ENCODE measurements at regions of chr6 and their contacts with region 1.

Region 1: GRCh38 chr6:12289933-12290820 is at the start of gene EDN1:
- DNase-seq: peak; percentile 84
- ATAC-seq: peak; percentile 88
- H3K4me3 ChIP-seq: peak within 1 kb of the TSS; percentile 74
- H3K27ac ChIP-seq: peak within 1 kb of the TSS; percentile 83
- H3K4me1 ChIP-seq: peaks cover 12% of the 10 kb centered on the region
- H3K27me3 ChIP-seq: no peaks in the 10 kb centered on the region
- CTCF ChIP-seq: peak; percentile 45
- POLR2A ChIP-seq: peak; percentile 89
- RAD21 ChIP-seq: peak; percentile 52
- total RNA-seq, gene EDN1: 5.6 and 8.6 TPM in 2 replicates

Region 2: GRCh38 chr6:12081771-12082170 is 208.4 kb before region 1 on chr6:
- CTCF ChIA-PET with region 1: interaction called, 3 read pairs
- POLR2A ChIA-PET with region 1: no interaction called
- dilution Hi-C with region 1: no loop called
- in situ Hi-C with region 1: no loop called
- intact Hi-C with region 1: loop called (anchors 10 kb)
- DNase-seq: no peak
- ATAC-seq: no peak
- H3K4me3 ChIP-seq: no peak overlapping the region
- H3K27ac ChIP-seq: no peak overlapping the region
- H3K4me1 ChIP-seq: peaks cover 10% of the 10 kb centered on the region
- H3K27me3 ChIP-seq: no peaks in the 10 kb centered on the region
- CTCF ChIP-seq: no peak
- POLR2A ChIP-seq: no peak
- RAD21 ChIP-seq: no peak

Region 3: GRCh38 chr6:12222405-12223366 is 67.5 kb before region 1 on chr6:
- CTCF ChIA-PET with region 1: no interaction called
- POLR2A ChIA-PET with region 1: no interaction called
- dilution Hi-C with region 1: no loop called
- in situ Hi-C with region 1: no loop called
- intact Hi-C with region 1: no loop called
- DNase-seq: no peak
- ATAC-seq: no peak
- H3K4me3 ChIP-seq: no peak overlapping the region
- H3K27ac ChIP-seq: no peak overlapping the region
- H3K4me1 ChIP-seq: no peaks in the 10 kb centered on the region
- H3K27me3 ChIP-seq: no peaks in the 10 kb centered on the region
- CTCF ChIP-seq: no peak
- POLR2A ChIP-seq: no peak
- RAD21 ChIP-seq: no peak

Region 4: GRCh38 chr6:12233693-12234571 is 56.2 kb before region 1 on chr6:
- CTCF ChIA-PET with region 1: interaction called, 10 read pairs
- POLR2A ChIA-PET with region 1: no interaction called
- dilution Hi-C with region 1: no loop called
- in situ Hi-C with region 1: no loop called
- intact Hi-C with region 1: loop called (anchors 1 kb)
- DNase-seq: peak; percentile 84
- ATAC-seq: peak; percentile 90
- H3K4me3 ChIP-seq: no peak overlapping the region
- H3K27ac ChIP-seq: no peak overlapping the region
- H3K4me1 ChIP-seq: peaks cover 4% of the 10 kb centered on the region
- H3K27me3 ChIP-seq: no peaks in the 10 kb centered on the region
- CTCF ChIP-seq: peak; percentile 98
- POLR2A ChIP-seq: no peak
- RAD21 ChIP-seq: peak; percentile 88

Region 5: GRCh38 chr6:12335131-12335527 is 45.0 kb after region 1 on chr6:
- CTCF ChIA-PET with region 1: no interaction called
- POLR2A ChIA-PET with region 1: no interaction called
- dilution Hi-C with region 1: no loop called
- in situ Hi-C with region 1: no loop called
- intact Hi-C with region 1: no loop called
- DNase-seq: no peak
- ATAC-seq: no peak
- H3K4me3 ChIP-seq: no peak overlapping the region
- H3K27ac ChIP-seq: no peak overlapping the region
- H3K4me1 ChIP-seq: no peaks in the 10 kb centered on the region; the same call in none of the 2 replicates
- H3K27me3 ChIP-seq: no peaks in the 10 kb centered on the region; the same call in 1 of the 2 replicates
- CTCF ChIP-seq: no peak
- POLR2A ChIP-seq: no peak
- RAD21 ChIP-seq: no peak

Region 6: DNA sequence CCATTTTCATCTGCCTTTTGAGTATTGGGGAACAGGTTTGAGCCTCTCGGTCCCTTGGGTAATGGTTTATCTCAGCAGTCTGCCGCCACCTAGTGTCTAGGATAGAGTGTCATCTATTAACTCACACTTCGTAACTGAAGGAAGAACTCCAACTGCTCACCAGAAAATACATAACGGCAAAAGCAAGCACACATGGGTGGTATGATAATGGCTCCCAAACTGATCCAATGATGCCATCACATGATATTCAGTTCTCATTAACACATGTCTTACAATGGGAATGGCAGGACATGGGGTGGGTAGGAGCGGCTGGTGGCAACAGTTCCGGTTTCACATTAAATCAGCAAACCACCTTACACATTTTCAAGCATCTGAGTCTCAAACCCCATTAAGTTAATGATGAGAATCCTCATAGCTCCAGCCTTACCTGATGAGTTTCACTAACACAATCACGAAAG is 315.7 kb after region 1 on chr6:
- CTCF ChIA-PET with region 1: interaction called, 21 read pairs
- POLR2A ChIA-PET with region 1: interaction called, 3 read pairs
- dilution Hi-C with region 1: no loop called
- in situ Hi-C with region 1: no loop called
- intact Hi-C with region 1: loop called (anchors 1 kb)
- DNase-seq: peak; percentile 75
- ATAC-seq: peak; percentile 77
- H3K4me3 ChIP-seq: no peak overlapping the region
- H3K27ac ChIP-seq: no peak overlapping the region
- H3K4me1 ChIP-seq: peaks cover 9% of the 10 kb centered on the region
- H3K27me3 ChIP-seq: no peaks in the 10 kb centered on the region
- CTCF ChIP-seq: peak; percentile 81
- POLR2A ChIP-seq: no peak
- RAD21 ChIP-seq: peak; percentile 88